Breast epithelium (tissue), 4 donors: ENCODE measurements at regions of chr6 and their contacts with region 1.

Region 1: GRCh38 chr6:5838656-5839396 is 167.9 kb downstream of the NRN1 start:
- DNase-seq: no peak
- H3K4me3 ChIP-seq: no peak overlapping the region
- H3K27ac ChIP-seq: no peak overlapping the region
- H3K4me1 ChIP-seq: no peaks in the 10 kb centered on the region
- H3K27me3 ChIP-seq: no peaks in the 10 kb centered on the region
- CTCF ChIP-seq: no peak
- POLR2A ChIP-seq: no peak

Region 2: DNA sequence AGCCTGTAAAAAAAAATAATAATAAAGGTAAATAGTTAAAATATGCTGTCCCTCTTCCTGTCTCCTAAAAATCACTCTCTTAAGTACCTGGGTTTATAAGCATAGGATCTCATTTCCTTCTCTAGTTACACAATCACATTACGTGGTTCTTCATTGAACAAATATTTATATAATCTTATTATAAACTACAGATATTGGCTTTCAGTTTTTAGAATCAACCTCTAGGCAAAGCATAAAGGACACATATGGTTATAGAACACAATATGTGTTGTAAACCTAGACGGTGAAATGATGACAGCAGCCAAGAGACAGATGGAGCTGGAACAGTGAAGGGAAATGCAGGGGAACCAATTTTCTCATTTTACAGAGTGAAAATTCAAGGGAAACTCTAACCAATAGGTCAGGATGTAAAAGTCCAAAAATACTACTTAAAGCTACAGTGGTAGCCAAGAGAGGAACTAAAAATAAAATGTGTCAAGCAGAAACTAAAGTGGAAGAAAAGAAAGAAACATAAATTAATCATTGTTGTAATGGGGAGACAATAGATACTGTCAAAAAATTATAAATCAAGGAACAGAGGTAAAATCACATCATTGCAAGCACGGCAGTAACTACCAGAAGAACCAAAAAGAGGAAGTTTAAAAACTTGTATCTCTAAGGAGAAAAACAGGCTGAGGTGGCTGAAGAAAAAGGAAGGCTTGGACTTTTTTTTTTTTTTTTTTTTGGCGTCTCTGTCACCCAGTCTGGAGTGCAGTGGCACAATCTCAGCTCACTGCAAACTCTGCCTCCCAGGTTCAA is 1145.5 kb before region 1 on chr6:
- intact Hi-C with region 1: no loop called
- DNase-seq: no peak
- H3K4me3 ChIP-seq: no peak overlapping the region
- H3K27ac ChIP-seq: no peak overlapping the region
- H3K4me1 ChIP-seq: no peaks in the 10 kb centered on the region
- H3K27me3 ChIP-seq: no peaks in the 10 kb centered on the region
- CTCF ChIP-seq: no peak
- POLR2A ChIP-seq: no peak

Region 3: GRCh38 chr6:6434151-6434550 is 595.3 kb after region 1 on chr6:
- intact Hi-C with region 1: loop called (anchors 5 kb)
- DNase-seq: no peak
- H3K4me3 ChIP-seq: no peak overlapping the region
- H3K27ac ChIP-seq: no peak overlapping the region
- H3K4me1 ChIP-seq: no peaks in the 10 kb centered on the region
- H3K27me3 ChIP-seq: no peaks in the 10 kb centered on the region
- CTCF ChIP-seq: no peak
- POLR2A ChIP-seq: no peak